HCT116 (cell line): ENCODE measurements at regions of chr4 and their contacts with region 1.

Region 1: DNA sequence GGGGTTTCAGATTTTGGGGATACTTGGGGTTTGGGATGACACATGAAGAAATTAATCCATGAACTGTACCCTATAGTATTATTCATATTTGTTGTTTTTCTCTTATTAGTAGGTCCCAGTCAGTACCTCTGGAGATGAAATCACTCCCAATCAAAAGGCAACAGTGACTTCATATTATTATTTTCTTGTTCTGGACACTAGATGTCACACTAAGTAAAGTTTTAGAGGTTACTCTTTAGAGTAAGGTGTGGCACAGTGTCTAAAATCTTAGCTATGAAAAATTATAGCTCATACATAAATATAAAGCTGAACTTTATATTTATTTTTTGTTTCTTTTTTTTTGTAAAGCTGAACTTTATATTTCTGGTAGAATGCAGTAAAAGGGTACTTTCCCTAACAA is 35.1 kb downstream of the FAM114A1 start:
- DNase-seq: no peak
- ATAC-seq: peak; percentile 69
- H3K4me3 ChIP-seq: no peak overlapping the region
- H3K27ac ChIP-seq: no peak overlapping the region
- H3K4me1 ChIP-seq: no peaks in the 10 kb centered on the region
- H3K27me3 ChIP-seq: no peaks in the 10 kb centered on the region
- CTCF ChIP-seq: peak in 2 of 3 experiments; percentile 49 to 55; a peak in 3 of 6 replicates
- POLR2A ChIP-seq: no peak
- RAD21 ChIP-seq: peak; percentile 79

Region 2: GRCh38 chr4:39134683-39135319 is 232.1 kb after region 1 on chr4:
- CTCF ChIA-PET with region 1: interaction called, 50 read pairs
- POLR2A ChIA-PET with region 1: no interaction called
- RAD21 ChIA-PET with region 1: interaction called, 8 to 13 read pairs
- intact Hi-C with region 1: loop called (anchors 1 kb)
- DNase-seq: no peak
- ATAC-seq: no peak; the same call in 1 of the 2 replicates
- H3K4me3 ChIP-seq: no peak overlapping the region
- H3K27ac ChIP-seq: no peak overlapping the region
- H3K4me1 ChIP-seq: peaks cover 0 to 7% of the 10 kb centered on the region in 2 experiments; a peak in 1 of 4 replicates
- H3K27me3 ChIP-seq: no peaks in the 10 kb centered on the region
- CTCF ChIP-seq: no peak
- POLR2A ChIP-seq: no peak
- RAD21 ChIP-seq: no peak

Region 3: GRCh38 chr4:39450618-39451017 is 547.9 kb after region 1 on chr4:
- CTCF ChIA-PET with region 1: no interaction called
- POLR2A ChIA-PET with region 1: no interaction called
- RAD21 ChIA-PET with region 1: no interaction called
- intact Hi-C with region 1: loop called (anchors 5 kb)
- DNase-seq: no peak
- ATAC-seq: no peak
- H3K4me3 ChIP-seq: no peak overlapping the region
- H3K27ac ChIP-seq: no peak overlapping the region
- H3K4me1 ChIP-seq: no peaks in the 10 kb centered on the region
- H3K27me3 ChIP-seq: no peaks in the 10 kb centered on the region
- CTCF ChIP-seq: no peak
- POLR2A ChIP-seq: no peak
- RAD21 ChIP-seq: no peak